Cardiac septum (tissue), 1 donor: ENCODE measurements at regions of chr10 and their contacts with region 1.

Region 1: GRCh38 chr10:95474228-95475002 is 86.8 kb downstream of the SORBS1 start:
- DNase-seq: no peak

Region 2: GRCh38 chr10:95430231-95430951 is 44.0 kb before region 1 on chr10:
- intact Hi-C with region 1: loop called (anchors 5 kb)
- DNase-seq: no peak

Region 3: GRCh38 chr10:95445837-95446486 is 28.5 kb before region 1 on chr10:
- intact Hi-C with region 1: loop called (anchors 2 kb)
- DNase-seq: no peak

Region 4: GRCh38 chr10:95601116-95601719 is 126.8 kb after region 1 on chr10:
- intact Hi-C with region 1: loop called (anchors 5 kb)
- DNase-seq: peak; percentile 86